ENCODE measurements at regions of chr6 and their contacts with region 1.

Region 1: GRCh38 chr6:10747251-10747972 is at the start of gene TMEM14B:
- DNase-seq: peak; percentile 97 to 100 (median 99)
- ATAC-seq: peak; percentile 99
- H3K4me3 ChIP-seq: peak within 1 kb of the TSS; percentile 71
- H3K4me3 Mint-ChIP-seq: peak within 1 kb of the TSS; percentile 85 to 98 (median 91)
- H3K27ac ChIP-seq: peak within 1 kb of the TSS; percentile 79
- H3K27ac Mint-ChIP-seq: peak within 1 kb of the TSS; percentile 82 to 99 (median 96)
- H3K4me1 ChIP-seq: peaks cover 12 to 37% of the 10 kb centered on the region in 2 donors
- H3K4me1 Mint-ChIP-seq: peaks cover 24 to 67% (median 62%) of the 10 kb centered on the region in 7 donors
- H3K27me3 ChIP-seq: no peaks in the 10 kb centered on the region
- H3K27me3 Mint-ChIP-seq: no peaks in the 10 kb centered on the region
- total RNA-seq, gene TMEM14B: 48.6 to 93.8 (median 75.4) TPM

Region 2: GRCh38 chr6:10404107-10404798 is 343.2 kb before region 1 on chr6:
- CTCF ChIA-PET with region 1: no interaction called
- POLR2A ChIA-PET with region 1: no interaction called
- intact Hi-C with region 1: loop called in 1 of 2 experiments (anchors 1 kb)
- DNase-seq: peak; percentile 77 to 90 (median 83)
- ATAC-seq: peak; percentile 93
- H3K4me3 ChIP-seq: peak overlapping the region; percentile 77
- H3K4me3 Mint-ChIP-seq: peak overlapping the region; percentile 79 to 91 (median 84)
- H3K27ac ChIP-seq: peak overlapping the region; percentile 9
- H3K27ac Mint-ChIP-seq: peak overlapping the region in 8 of 9 donors; percentile 41 to 90 (median 72)
- H3K4me1 ChIP-seq: peaks cover 10 to 12% of the 10 kb centered on the region in 2 donors
- H3K4me1 Mint-ChIP-seq: peaks cover 6 to 20% (median 14%) of the 10 kb centered on the region in 7 donors
- H3K27me3 ChIP-seq: peaks cover 0 to 9% of the 10 kb centered on the region in 2 donors
- H3K27me3 Mint-ChIP-seq: peaks cover 48 to 90% (median 66%) of the 10 kb centered on the region in 5 donors

Region 3: DNA sequence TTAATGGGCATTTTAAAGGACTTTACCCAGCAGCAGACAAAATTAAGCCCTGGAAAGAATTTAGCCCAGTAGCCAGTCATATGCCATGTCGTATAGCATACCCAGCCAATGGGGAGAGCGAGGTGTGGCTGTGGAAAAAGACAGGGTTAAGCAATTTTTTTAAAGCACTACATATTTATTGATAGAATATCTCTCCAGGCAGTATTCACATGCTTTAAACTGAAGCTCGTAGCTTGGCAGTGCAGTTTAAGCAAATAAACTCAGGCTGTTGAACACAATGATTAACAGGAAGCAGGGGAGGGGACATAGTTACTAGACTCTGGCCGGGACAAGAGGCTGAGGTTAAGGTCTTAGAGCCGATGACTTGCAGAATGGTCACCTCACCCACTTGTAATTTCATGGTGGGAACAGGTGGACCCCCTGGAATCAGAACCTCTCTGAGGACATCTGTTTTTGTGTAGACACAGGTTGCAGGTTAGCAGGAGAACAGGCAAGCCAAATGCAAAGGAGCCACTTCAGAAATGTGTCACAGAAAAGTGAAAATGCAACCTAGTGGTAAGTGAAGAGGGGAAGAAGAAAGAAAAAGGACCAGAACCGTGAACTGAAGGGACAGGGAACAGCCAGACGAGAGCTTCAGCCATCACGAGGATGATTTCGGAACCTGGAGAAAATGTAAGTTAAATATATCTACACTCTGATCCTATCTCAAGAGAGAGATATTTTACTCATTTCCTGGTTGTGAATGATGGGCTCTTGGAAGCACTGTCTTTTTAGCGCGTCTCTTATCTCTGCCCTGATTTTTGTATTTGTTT is 219.0 kb before region 1 on chr6:
- CTCF ChIA-PET with region 1: interaction called, 3 read pairs
- POLR2A ChIA-PET with region 1: no interaction called
- intact Hi-C with region 1: loop called (anchors 1 to 2 kb)
- DNase-seq: peak in 6 of 9 donors; percentile 13 to 36 (median 27)
- ATAC-seq: peak; percentile 70
- H3K4me3 ChIP-seq: peak overlapping the region; percentile 70
- H3K4me3 Mint-ChIP-seq: peak overlapping the region; percentile 87 to 98 (median 94)
- H3K27ac ChIP-seq: peak overlapping the region; percentile 69
- H3K27ac Mint-ChIP-seq: peak overlapping the region; percentile 74 to 95 (median 90)
- H3K4me1 ChIP-seq: peaks cover 10 to 15% of the 10 kb centered on the region in 2 donors
- H3K4me1 Mint-ChIP-seq: peaks cover 32 to 52% (median 44%) of the 10 kb centered on the region in 7 donors
- H3K27me3 ChIP-seq: no peaks in the 10 kb centered on the region
- H3K27me3 Mint-ChIP-seq: peaks cover 0 to 5% (median 0%) of the 10 kb centered on the region in 5 donors

Region 4: GRCh38 chr6:10759312-10759839 is 12.0 kb after region 1 on chr6:
- CTCF ChIA-PET with region 1: interaction called, 4 read pairs
- POLR2A ChIA-PET with region 1: interaction called, 5 read pairs
- intact Hi-C with region 1: loop called in 1 of 2 experiments (anchors 1 kb)
- DNase-seq: peak in 4 of 9 donors; percentile 8 to 27 (median 14)
- ATAC-seq: peak; percentile 66
- H3K4me3 ChIP-seq: no peak overlapping the region
- H3K4me3 Mint-ChIP-seq: no peak overlapping the region
- H3K27ac ChIP-seq: no peak overlapping the region
- H3K27ac Mint-ChIP-seq: peak overlapping the region in 2 of 9 donors; percentile 28 to 72
- H3K4me1 ChIP-seq: no peaks in the 10 kb centered on the region
- H3K4me1 Mint-ChIP-seq: peaks cover 5 to 35% (median 24%) of the 10 kb centered on the region in 7 donors
- H3K27me3 ChIP-seq: no peaks in the 10 kb centered on the region
- H3K27me3 Mint-ChIP-seq: no peaks in the 10 kb centered on the region

Region 5: GRCh38 chr6:10831609-10832008 is 84.2 kb after region 1 on chr6:
- CTCF ChIA-PET with region 1: no interaction called
- POLR2A ChIA-PET with region 1: no interaction called
- intact Hi-C with region 1: no loop called
- DNase-seq: no peak
- ATAC-seq: no peak
- H3K4me3 ChIP-seq: no peak overlapping the region
- H3K4me3 Mint-ChIP-seq: no peak overlapping the region
- H3K27ac ChIP-seq: no peak overlapping the region
- H3K27ac Mint-ChIP-seq: no peak overlapping the region
- H3K4me1 ChIP-seq: no peaks in the 10 kb centered on the region
- H3K4me1 Mint-ChIP-seq: no peaks in the 10 kb centered on the region
- H3K27me3 ChIP-seq: peaks cover 4 to 7% of the 10 kb centered on the region in 2 donors
- H3K27me3 Mint-ChIP-seq: peaks cover 16 to 20% (median 17%) of the 10 kb centered on the region in 5 donors

Region 6: DNA sequence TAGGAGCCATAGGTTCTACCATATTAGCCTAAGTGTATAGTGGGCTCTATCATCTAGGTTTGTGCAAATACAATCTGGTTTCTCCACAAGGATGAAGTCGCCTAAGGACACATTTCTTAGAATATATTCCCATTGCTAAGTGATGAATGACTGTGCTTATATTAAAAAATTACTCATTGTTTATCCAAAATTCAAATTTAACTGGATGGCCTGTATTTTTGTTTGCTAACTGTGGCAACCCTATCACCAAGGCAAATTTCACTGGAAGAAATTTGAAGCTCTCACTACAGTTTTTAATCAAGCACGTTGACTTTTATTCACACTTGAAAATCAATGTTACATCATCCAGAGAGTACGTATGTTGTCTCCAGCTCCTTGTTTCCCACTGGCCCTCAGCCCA is 120.5 kb after region 1 on chr6:
- CTCF ChIA-PET with region 1: no interaction called
- POLR2A ChIA-PET with region 1: no interaction called
- intact Hi-C with region 1: no loop called
- DNase-seq: no peak
- ATAC-seq: no peak
- H3K4me3 ChIP-seq: no peak overlapping the region
- H3K4me3 Mint-ChIP-seq: no peak overlapping the region
- H3K27ac ChIP-seq: no peak overlapping the region
- H3K27ac Mint-ChIP-seq: no peak overlapping the region
- H3K4me1 ChIP-seq: no peaks in the 10 kb centered on the region
- H3K4me1 Mint-ChIP-seq: no peaks in the 10 kb centered on the region
- H3K27me3 ChIP-seq: no peaks in the 10 kb centered on the region
- H3K27me3 Mint-ChIP-seq: peaks cover 0 to 9% (median 3%) of the 10 kb centered on the region in 5 donors

Region 7: GRCh38 chr6:11537229-11538051 is 790.0 kb after region 1 on chr6 and contains the start of gene TMEM170B:
- CTCF ChIA-PET with region 1: no interaction called
- POLR2A ChIA-PET with region 1: no interaction called
- intact Hi-C with region 1: loop called in 1 of 2 experiments (anchors 1 kb)
- DNase-seq: peak; percentile 94 to 99 (median 98)
- ATAC-seq: peak; percentile 95
- H3K4me3 ChIP-seq: peak within 1 kb of the TSS; percentile 62
- H3K4me3 Mint-ChIP-seq: peak within 1 kb of the TSS; percentile 82 to 90 (median 88)
- H3K27ac ChIP-seq: peak within 1 kb of the TSS; percentile 76
- H3K27ac Mint-ChIP-seq: peak within 1 kb of the TSS in 8 of 9 donors; percentile 67 to 93 (median 83)
- H3K4me1 ChIP-seq: peaks cover 4 to 5% of the 10 kb centered on the region in 2 donors
- H3K4me1 Mint-ChIP-seq: peaks cover 6 to 28% (median 19%) of the 10 kb centered on the region in 7 donors
- H3K27me3 ChIP-seq: no peaks in the 10 kb centered on the region
- H3K27me3 Mint-ChIP-seq: peaks cover 0 to 76% (median 7%) of the 10 kb centered on the region in 5 donors
- total RNA-seq, gene TMEM170B: 0.29 to 12.7 (median 3.4) TPM

Measured in naive thymus-derived CD4-positive, alpha-beta T cell (primary cell).